Cardiac septum (tissue), 1 donor: ENCODE measurements at regions of chr3 and their contacts with region 1.

Region 1: GRCh38 chr3:154235330-154235729 is 89.0 kb downstream of the DHX36 start:
- DNase-seq: no peak

Region 2: DNA sequence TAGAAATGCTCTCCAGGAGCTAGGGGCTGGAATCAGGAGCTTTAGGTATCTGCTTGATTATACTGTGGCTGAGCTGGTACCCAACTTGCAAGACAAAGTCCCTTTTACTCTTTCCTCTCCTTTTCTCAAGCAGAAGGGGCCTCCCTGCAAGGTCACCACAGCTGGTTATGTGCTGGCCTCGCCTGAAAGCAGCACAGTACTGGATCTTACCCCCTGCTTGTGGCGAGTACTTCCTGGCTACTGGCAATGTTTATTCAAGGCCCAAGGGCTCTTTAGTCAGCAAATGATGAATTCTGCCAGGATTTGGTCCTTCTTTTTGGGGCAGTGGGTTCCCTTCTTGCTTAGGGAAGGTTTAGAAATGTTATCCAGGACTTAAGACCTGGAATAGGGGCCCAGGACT is 838.7 kb before region 1 on chr3:
- intact Hi-C with region 1: no loop called
- DNase-seq: no peak

Region 3: DNA sequence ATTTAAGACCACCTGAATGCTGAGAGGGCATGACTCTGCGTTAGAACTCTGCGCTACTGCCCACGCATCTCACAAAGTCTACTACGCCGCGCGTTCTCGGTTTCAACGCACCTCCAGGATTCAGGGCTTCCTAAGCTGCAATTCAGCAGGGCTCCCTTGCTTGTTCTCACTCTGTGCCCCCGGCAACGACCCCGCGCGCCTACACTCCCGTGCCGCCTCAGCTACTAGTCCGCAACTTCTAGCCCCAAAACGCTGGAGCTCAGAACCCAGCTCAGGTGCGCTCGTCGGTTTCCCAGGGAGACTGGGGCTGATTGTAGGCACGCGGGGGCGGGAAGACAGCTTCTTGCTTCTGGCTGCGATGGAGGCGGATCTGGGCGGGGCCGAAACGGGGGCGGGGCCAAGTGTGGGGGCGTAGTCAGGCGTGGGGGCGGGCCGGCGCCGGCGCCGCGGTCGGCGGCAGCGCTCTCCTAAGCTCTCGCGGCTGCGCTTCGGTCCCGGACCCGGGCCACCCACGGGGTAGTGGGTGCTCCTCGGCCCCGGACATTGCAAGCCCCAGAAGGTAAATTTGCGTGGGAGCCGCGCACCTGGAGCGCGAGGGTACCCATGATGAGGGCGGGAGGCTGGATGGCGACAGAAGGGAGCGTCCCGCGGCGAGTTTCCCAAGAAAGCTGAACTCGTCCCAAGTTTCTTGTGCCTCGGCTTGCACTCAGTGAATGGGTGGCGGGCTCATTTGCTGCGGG is 114.2 kb before region 1 on chr3 and contains the start of gene ARHGEF26:
- intact Hi-C with region 1: loop called (anchors 5 kb)
- DNase-seq: peak; percentile 92
- total RNA-seq, gene ARHGEF26: 2.9 TPM

Region 4: DNA sequence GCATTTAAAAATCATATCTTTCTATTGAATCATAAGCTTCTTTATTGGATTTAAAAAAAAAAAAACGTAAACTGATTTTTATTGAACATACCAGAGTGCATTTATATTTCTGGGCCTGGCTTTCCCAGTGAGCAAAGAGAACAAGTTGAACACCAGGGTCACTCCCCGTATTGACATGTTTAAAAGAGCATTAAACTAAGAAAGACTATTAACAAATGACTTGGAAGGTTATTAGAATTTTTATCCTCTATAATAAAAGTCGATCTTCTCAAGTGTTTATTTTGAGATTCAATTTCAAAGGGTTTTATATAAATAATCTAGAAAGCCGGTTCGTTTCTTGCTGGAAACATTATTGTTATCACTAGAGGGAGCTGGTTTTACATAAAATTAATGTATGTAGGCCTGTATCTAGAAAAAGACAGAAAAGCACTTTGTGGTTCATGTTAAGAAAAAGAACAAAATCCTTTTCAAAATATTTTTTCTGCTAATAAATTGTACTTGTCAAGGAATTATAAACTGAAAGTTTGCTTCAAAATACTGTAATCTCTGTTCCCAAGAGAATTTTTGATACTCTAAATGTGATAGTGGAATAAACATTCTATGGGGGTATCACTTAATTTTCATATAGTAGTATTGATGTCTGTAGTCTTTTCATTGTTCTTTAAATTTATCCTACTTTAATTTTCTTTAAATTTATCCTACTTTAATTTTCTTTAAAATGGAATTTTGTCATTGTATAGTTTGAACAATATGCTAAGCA is 523.0 kb after region 1 on chr3:
- intact Hi-C with region 1: no loop called
- DNase-seq: no peak